PC-3 (cell line): ENCODE measurements at regions of chr10 and their contacts with region 1.

Region 1: DNA sequence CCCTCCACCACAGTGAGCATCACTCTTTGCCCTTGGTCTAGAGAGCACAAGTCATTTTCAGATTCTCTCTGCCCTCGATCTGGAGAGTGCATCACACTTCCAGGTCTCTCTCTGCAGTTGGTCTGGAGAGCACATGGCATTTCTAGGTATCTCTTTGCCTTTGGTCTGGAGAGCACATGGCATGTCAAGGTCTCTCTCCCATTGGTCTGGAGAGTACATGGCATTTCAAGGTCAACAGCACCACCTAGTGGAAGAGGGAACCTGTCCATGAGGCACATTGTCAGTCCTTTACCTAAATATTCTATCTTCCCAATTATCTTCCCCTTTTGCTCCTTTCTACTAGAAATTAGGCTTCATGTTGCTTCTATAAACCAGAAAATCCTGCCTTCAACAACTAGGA is 1139.4 kb downstream of the XPNPEP1 start:
- DNase-seq: peak; percentile 80
- ATAC-seq: peak; percentile 73
- H3K4me3 ChIP-seq: no peak overlapping the region
- H3K27ac ChIP-seq: no peak overlapping the region
- H3K4me1 ChIP-seq: peaks cover 15% of the 10 kb centered on the region
- H3K27me3 ChIP-seq: no peaks in the 10 kb centered on the region
- CTCF ChIP-seq: peak; percentile 68

Region 2: DNA sequence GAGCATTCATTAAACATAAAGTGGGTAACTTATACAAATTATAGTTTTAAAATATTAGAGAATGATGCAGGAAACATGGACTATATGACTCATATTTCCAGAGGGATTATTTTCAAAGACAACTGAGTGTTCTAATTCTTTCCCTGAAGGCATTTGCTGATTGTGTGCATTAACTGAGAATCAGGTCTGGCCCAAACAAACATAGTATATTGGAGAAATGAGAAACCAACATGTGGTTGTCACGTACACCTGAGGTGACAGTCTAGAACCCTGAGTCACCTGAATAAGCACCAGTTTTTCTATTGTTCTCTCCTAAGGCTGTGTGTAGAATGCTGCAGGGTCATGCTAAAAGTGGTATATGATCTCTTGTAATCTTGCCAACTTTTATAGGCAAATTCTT is 13.7 kb after region 1 on chr10:
- CTCF ChIA-PET with region 1: no interaction called
- POLR2A ChIA-PET with region 1: no interaction called
- intact Hi-C with region 1: no loop called
- DNase-seq: peak; percentile 84
- ATAC-seq: peak; percentile 90
- H3K4me3 ChIP-seq: no peak overlapping the region
- H3K27ac ChIP-seq: peak overlapping the region; percentile 79
- H3K4me1 ChIP-seq: peaks cover 20% of the 10 kb centered on the region
- H3K27me3 ChIP-seq: no peaks in the 10 kb centered on the region
- CTCF ChIP-seq: no peak

Region 3: DNA sequence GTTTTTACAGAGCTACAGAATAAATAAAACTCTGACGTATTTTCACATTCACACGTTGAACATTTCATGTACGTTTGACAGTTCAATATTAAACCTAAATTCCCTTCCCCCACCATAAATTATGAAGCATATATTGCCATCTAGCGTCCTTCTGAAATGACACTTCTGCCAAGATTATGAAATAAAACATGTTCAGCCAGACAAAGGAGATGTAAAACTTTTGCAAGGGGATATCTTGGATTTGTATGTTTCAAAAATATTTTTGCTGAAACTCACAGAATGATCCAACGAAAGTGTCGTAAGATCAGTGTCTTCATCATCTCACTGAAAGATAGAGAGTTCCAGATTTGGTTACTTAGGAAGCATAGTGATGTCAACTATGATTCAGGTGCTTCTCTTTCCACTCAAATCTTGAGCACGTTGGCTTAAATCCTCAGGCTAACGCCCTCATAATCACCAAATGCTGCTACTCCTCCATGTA is 235.1 kb after region 1 on chr10:
- CTCF ChIA-PET with region 1: no interaction called
- POLR2A ChIA-PET with region 1: no interaction called
- intact Hi-C with region 1: loop called (anchors 5 kb)
- DNase-seq: peak; percentile 63
- ATAC-seq: peak; percentile 31
- H3K4me3 ChIP-seq: no peak overlapping the region
- H3K27ac ChIP-seq: no peak overlapping the region
- H3K4me1 ChIP-seq: peaks cover 8% of the 10 kb centered on the region; the same call in 1 of the 2 replicates
- H3K27me3 ChIP-seq: no peaks in the 10 kb centered on the region
- CTCF ChIP-seq: peak; percentile 74